Prostate gland (tissue), 2 donors: ENCODE measurements at regions of chr22 and their contacts with region 1.

Region 1: DNA sequence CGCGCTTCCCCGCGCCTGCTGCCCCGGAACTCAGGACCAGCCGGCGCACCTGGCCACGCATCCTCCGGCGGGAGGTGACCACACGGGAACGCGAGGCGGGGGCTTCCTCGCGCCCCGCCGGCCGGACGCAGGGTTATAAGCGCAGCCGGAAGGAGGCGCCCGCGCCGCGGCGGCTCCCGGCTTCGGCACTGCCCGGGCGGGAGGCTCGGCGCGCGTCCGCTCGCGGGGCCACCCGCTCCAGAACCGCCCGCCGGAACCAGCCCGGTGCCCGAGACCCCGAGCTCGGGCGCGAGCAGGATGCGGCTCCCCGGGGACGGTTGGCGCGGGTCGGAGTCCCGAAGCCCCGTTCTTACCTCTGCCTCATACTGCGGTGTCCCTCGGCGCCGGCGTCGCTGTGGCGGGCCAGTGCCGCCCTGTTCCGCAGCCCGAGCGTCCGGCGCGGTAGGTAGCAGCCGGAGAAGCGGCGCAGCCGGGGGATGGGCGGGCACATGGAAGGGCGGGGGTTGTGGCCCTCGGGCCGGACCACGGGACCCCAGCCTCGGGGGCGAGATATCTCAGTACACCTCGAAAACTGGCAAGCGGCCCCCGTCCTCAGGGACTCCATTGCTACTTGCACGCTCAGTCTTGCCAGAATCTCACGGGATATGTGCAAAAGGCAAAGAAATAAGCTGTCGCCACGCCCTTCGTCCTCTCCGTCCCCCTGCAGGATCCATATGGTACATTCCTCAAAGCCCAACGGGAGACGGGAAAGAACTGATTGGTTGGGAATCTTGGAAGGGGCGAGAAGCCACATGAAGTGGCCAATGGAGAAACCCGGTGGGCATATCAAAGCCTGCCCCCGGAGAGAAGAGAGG is 23.1 kb downstream of the MICAL3 start:
- DNase-seq: peak; percentile 85
- H3K4me3 ChIP-seq: peak overlapping the region; percentile 81 to 91
- H3K27ac ChIP-seq: peak overlapping the region; percentile 88 to 89
- H3K4me1 ChIP-seq: peaks cover 3% of the 10 kb centered on the region
- H3K27me3 ChIP-seq: no peaks in the 10 kb centered on the region
- CTCF ChIP-seq: peak in 3 of 4 experiments; percentile 49 to 60 (median 59)
- POLR2A ChIP-seq: peak; percentile 75

Region 2: DNA sequence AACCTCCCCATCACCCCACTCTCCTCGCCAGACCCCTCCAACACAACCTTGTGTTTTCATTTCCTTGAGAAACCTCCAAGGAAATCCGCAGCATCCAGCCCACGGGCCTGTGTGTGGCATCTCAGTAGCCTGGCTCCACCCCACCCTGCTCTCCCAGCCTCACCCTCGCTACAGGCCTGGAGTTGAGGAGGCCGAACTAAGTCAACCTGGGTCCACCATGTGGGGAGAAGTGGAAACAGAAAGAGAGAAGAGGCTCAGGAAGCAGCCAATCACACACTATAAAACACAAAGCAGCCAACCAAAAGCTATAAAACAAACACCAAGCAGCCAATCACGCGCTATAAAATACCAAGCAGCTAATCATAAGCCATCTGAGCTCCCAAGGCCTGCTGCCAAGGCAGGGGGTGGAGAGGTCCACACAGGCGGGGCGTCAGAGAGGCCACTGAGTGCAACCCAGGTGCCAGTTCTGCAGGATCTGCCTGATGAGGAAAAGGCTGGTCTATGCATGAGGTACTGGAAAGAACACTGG is 48.9 kb before region 1 on chr22:
- intact Hi-C with region 1: no loop called
- DNase-seq: no peak
- H3K4me3 ChIP-seq: no peak overlapping the region
- H3K27ac ChIP-seq: no peak overlapping the region
- H3K4me1 ChIP-seq: peaks cover 10% of the 10 kb centered on the region
- H3K27me3 ChIP-seq: no peaks in the 10 kb centered on the region
- CTCF ChIP-seq: no peak
- POLR2A ChIP-seq: no peak

Region 3: DNA sequence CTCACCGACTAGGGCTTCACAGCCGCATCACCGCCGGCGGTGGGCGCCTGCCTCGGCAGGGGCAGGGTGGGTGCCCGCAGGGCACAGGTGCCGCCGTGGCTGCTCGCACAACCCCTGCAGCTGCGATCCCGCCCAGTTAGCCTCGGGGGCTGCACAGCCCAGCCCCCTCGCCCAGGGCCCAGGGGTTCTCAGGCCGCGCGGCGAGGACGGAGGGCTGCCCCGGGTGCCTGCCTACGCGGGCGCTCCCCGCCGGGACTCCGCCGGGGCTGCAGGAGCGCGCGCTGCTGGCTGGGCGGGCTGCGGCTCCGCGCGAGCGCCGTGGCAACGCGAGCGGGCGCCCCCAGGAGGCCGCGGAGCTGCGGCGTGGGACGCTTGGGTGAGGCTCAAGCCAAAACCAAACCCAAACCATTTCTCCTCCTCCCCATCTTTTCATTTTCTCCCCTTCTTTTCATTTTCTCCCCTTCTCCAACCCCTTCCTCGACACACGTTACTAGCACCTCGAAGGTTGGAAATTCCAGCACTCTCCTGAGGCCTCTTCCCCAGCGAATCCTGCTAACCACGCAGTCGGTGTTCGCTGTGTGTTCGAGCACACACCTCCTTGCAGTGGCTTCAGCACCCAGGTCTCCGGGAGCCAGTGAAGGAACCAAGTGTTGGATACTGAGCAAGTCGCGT is 23.1 kb after region 1 on chr22 and contains the start of gene MICAL3:
- intact Hi-C with region 1: loop called (anchors 1 kb)
- DNase-seq: peak; percentile 57
- H3K4me3 ChIP-seq: peak within 1 kb of the TSS; percentile 55 to 58
- H3K27ac ChIP-seq: peak within 1 kb of the TSS; percentile 76 to 88
- H3K4me1 ChIP-seq: no peaks in the 10 kb centered on the region
- H3K27me3 ChIP-seq: no peaks in the 10 kb centered on the region
- CTCF ChIP-seq: peak in 3 of 4 experiments; percentile 31 to 68 (median 66)
- POLR2A ChIP-seq: no peak
- total RNA-seq, gene MICAL3: 58.6 to 78.7 TPM

Region 4: DNA sequence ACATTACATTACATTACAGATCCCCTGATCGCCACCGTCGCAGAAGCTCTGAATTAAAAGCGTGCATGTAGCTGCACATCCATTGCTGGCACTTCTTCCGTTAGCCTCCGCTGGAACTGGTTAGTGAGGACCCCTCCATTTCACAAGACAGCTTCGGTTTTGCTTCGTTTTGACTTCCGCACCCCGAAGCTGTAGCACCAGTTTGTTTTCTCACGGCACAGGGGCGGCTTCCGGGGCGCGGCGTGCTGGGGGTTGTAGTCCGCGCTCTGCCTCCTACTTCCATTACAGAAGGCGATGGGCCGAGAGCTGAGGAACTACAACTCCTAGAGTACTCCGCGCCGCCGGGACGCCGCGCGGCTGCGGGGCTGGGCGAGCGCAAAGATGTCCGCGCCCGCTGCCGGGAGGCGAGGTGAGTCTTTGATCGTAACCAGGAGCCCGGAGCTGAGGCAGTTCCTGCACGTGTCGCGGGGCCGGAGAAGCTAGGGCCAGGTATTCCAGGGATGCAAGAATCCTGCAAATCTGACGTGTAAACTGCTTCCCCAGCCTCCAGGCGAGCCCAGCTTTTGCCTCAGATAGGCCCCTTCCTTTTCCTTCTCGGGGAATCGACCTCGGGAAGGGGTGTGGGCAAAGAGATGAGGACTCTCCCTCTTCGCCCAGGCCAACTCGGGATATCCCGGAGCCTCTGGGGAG is 76.5 kb after region 1 on chr22 and contains the start of gene PEX26:
- intact Hi-C with region 1: loop called (anchors 2 kb)
- DNase-seq: peak; percentile 96
- H3K4me3 ChIP-seq: peak within 1 kb of the TSS; percentile 88 to 89
- H3K27ac ChIP-seq: peak within 1 kb of the TSS; percentile 71 to 82
- H3K4me1 ChIP-seq: peaks cover 19% of the 10 kb centered on the region
- H3K27me3 ChIP-seq: no peaks in the 10 kb centered on the region
- CTCF ChIP-seq: no peak
- POLR2A ChIP-seq: peak; percentile 54
- total RNA-seq, gene PEX26: 34.7 to 38.2 TPM

Region 5: DNA sequence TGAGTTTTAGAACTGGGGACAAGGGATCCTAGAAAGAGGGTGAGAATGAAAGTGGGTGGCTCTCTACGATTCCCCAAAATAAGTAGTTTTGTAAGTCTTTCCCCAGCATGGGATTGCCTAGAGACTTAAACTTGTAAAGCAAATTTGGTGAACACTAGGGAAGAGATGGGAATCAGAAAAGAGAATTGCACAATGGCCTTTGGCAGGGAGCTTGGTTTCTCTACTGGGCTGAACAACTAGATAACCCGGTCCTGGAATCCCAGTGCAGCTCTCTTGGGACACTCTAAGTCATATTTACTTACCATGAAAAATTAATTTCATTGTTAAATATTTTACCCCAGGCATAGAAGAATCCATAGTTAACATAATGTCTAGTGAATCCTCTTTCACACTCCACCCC is 132.2 kb after region 1 on chr22:
- intact Hi-C with region 1: no loop called
- DNase-seq: no peak
- H3K4me3 ChIP-seq: no peak overlapping the region
- H3K27ac ChIP-seq: no peak overlapping the region
- H3K4me1 ChIP-seq: no peaks in the 10 kb centered on the region
- H3K27me3 ChIP-seq: no peaks in the 10 kb centered on the region
- CTCF ChIP-seq: no peak
- POLR2A ChIP-seq: no peak